ENCODE measurements at regions of chr18 and their contacts with region 1.

Region 1: DNA sequence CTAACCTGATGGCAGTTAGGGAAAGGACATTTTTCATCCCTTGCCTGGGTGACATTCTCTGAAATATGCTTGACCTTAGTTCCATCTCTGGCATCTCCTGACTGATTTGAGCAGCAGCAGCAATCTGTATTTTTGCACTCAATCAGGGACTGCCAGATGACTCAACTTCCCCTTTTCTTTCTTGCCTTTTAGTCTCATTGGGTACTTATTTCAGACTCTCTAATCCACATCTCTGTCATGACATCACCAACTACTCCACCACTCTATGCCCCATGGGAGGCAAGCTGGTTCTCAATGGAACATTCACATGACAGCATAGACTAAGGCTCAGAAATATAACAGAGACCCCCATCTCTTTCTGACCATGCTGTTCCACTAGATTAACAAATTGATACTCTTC is 254.2 kb downstream of the RIT2 start:
- DNase-seq: no peak
- ATAC-seq: no peak
- H3K4me3 ChIP-seq: no peak overlapping the region
- H3K4me3 Mint-ChIP-seq: no peak overlapping the region
- H3K27ac ChIP-seq: no peak overlapping the region
- H3K27ac Mint-ChIP-seq: no peak overlapping the region
- H3K4me1 ChIP-seq: no peaks in the 10 kb centered on the region
- H3K4me1 Mint-ChIP-seq: no peaks in the 10 kb centered on the region
- H3K27me3 ChIP-seq: no peaks in the 10 kb centered on the region
- H3K27me3 Mint-ChIP-seq: no peaks in the 10 kb centered on the region

Region 2: GRCh38 chr18:42437646-42438045 is 423.6 kb before region 1 on chr18:
- CTCF ChIA-PET with region 1: no interaction called
- POLR2A ChIA-PET with region 1: no interaction called
- intact Hi-C with region 1: no loop called
- DNase-seq: no peak
- ATAC-seq: no peak
- H3K4me3 ChIP-seq: no peak overlapping the region
- H3K4me3 Mint-ChIP-seq: no peak overlapping the region
- H3K27ac ChIP-seq: no peak overlapping the region
- H3K27ac Mint-ChIP-seq: no peak overlapping the region
- H3K4me1 ChIP-seq: no peaks in the 10 kb centered on the region
- H3K4me1 Mint-ChIP-seq: no peaks in the 10 kb centered on the region
- H3K27me3 ChIP-seq: no peaks in the 10 kb centered on the region
- H3K27me3 Mint-ChIP-seq: no peaks in the 10 kb centered on the region

Region 3: GRCh38 chr18:42586601-42587000 is 274.7 kb before region 1 on chr18:
- CTCF ChIA-PET with region 1: no interaction called
- POLR2A ChIA-PET with region 1: no interaction called
- intact Hi-C with region 1: no loop called
- DNase-seq: no peak
- ATAC-seq: no peak
- H3K4me3 ChIP-seq: no peak overlapping the region
- H3K4me3 Mint-ChIP-seq: no peak overlapping the region
- H3K27ac ChIP-seq: no peak overlapping the region
- H3K27ac Mint-ChIP-seq: no peak overlapping the region
- H3K4me1 ChIP-seq: no peaks in the 10 kb centered on the region
- H3K4me1 Mint-ChIP-seq: no peaks in the 10 kb centered on the region
- H3K27me3 ChIP-seq: no peaks in the 10 kb centered on the region
- H3K27me3 Mint-ChIP-seq: no peaks in the 10 kb centered on the region

Region 4: DNA sequence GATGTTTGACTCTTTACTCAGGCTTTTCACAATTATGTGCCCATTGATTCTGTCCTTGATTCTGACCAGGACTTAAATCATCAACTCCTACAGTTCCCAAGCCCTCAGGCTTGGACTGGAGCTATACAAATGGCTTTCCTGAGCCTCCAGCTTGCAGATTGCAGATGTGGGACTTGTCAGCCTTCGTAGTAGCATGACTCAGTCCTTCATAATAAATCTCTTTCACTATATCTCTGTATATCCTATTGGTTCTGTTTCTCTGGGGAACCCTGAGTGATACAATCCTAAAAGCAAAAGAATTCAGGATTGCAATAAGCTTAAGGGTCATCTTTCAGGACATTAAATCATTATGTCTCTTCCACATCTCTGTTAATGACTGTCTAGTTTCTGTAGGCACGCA is 102.4 kb before region 1 on chr18:
- CTCF ChIA-PET with region 1: no interaction called
- POLR2A ChIA-PET with region 1: no interaction called
- intact Hi-C with region 1: no loop called
- DNase-seq: no peak
- ATAC-seq: no peak
- H3K4me3 ChIP-seq: no peak overlapping the region
- H3K4me3 Mint-ChIP-seq: no peak overlapping the region
- H3K27ac ChIP-seq: no peak overlapping the region
- H3K27ac Mint-ChIP-seq: no peak overlapping the region
- H3K4me1 ChIP-seq: no peaks in the 10 kb centered on the region
- H3K4me1 Mint-ChIP-seq: peaks cover 0 to 1% (median 0%) of the 10 kb centered on the region in 7 donors
- H3K27me3 ChIP-seq: no peaks in the 10 kb centered on the region
- H3K27me3 Mint-ChIP-seq: no peaks in the 10 kb centered on the region

Region 5: GRCh38 chr18:42906761-42907160 is 45.5 kb after region 1 on chr18:
- CTCF ChIA-PET with region 1: no interaction called
- POLR2A ChIA-PET with region 1: no interaction called
- intact Hi-C with region 1: loop called in 1 of 2 experiments (anchors 1 kb)
- DNase-seq: no peak
- ATAC-seq: no peak
- H3K4me3 ChIP-seq: no peak overlapping the region
- H3K4me3 Mint-ChIP-seq: no peak overlapping the region
- H3K27ac ChIP-seq: no peak overlapping the region
- H3K27ac Mint-ChIP-seq: no peak overlapping the region
- H3K4me1 ChIP-seq: no peaks in the 10 kb centered on the region
- H3K4me1 Mint-ChIP-seq: no peaks in the 10 kb centered on the region
- H3K27me3 ChIP-seq: no peaks in the 10 kb centered on the region
- H3K27me3 Mint-ChIP-seq: no peaks in the 10 kb centered on the region

Measured in naive thymus-derived CD4-positive, alpha-beta T cell (primary cell).